ENCODE measurements at regions of chr17 and their contacts with region 1.

Region 1: DNA sequence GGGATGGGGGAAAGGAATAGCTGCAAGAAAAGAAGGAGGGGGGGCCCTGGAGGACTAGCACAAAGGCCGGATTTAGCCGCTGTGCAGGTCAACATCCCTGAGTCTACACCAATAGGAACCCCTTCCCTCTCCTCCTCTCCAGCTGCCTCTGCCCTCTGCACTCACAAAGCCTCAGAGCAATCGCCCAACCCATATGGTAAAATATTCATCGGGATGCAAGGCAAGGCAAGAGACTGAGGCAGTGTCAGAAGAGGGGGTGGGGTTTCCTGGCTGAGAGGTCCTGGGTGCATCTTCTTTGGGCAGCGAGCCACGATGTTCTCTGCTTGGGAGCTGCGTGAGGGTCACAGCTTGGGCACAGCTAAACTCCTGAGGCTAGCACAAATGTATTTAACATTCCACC is 115.5 kb upstream of the NLRP1 start:
- DNase-seq: no peak
- H3K4me3 ChIP-seq: peak overlapping the region in 3 of 4 experiments; percentile 5 to 36 (median 14); a peak in 2 of 8 replicates
- H3K27ac ChIP-seq: peak overlapping the region; percentile 41; the same call in 1 of the 2 replicates
- H3K4me1 ChIP-seq: peaks cover 11 to 25% (median 19%) of the 10 kb centered on the region in 4 experiments; a peak in 5 of 7 replicates
- H3K27me3 ChIP-seq: no peaks in the 10 kb centered on the region
- CTCF ChIP-seq: no peak
- EP300 ChIP-seq: no peak
- POLR2A ChIP-seq: no peak
- RAD21 ChIP-seq: no peak

Region 2: DNA sequence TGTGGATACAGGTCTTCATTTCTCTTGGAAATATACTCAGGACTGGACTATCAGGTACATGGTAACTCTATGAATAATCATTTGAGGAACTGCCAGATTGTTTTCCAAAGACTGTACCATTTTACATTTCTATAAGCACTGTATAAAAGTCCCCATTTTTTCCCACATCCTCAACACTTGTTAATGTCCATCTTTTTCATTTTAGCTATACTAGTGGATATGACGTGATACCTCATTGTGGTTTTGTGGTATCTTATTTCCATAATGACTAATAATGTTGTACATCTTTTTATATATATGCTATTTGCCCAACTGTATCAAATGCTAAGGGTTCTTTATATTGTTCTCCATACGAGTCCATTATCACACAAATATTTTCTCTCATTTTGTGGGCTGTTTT is 303.2 kb before region 1 on chr17:
- CTCF ChIA-PET with region 1: no interaction called
- POLR2A ChIA-PET with region 1: no interaction called
- DNase-seq: no peak
- H3K4me3 ChIP-seq: no peak overlapping the region
- H3K27ac ChIP-seq: no peak overlapping the region
- H3K4me1 ChIP-seq: no peaks in the 10 kb centered on the region
- H3K27me3 ChIP-seq: peaks cover 0 to 2% (median 0%) of the 10 kb centered on the region in 4 experiments; a peak in 1 of 7 replicates
- CTCF ChIP-seq: no peak
- EP300 ChIP-seq: no peak
- POLR2A ChIP-seq: no peak
- RAD21 ChIP-seq: no peak

Region 3: GRCh38 chr17:5563456-5563855 is 136.4 kb before region 1 on chr17:
- CTCF ChIA-PET with region 1: no interaction called
- POLR2A ChIA-PET with region 1: no interaction called
- DNase-seq: no peak
- H3K4me3 ChIP-seq: no peak overlapping the region
- H3K27ac ChIP-seq: no peak overlapping the region
- H3K4me1 ChIP-seq: no peaks in the 10 kb centered on the region
- H3K27me3 ChIP-seq: no peaks in the 10 kb centered on the region; a peak in 1 of 7 replicates
- CTCF ChIP-seq: no peak
- EP300 ChIP-seq: no peak
- POLR2A ChIP-seq: no peak
- RAD21 ChIP-seq: no peak

Region 4: DNA sequence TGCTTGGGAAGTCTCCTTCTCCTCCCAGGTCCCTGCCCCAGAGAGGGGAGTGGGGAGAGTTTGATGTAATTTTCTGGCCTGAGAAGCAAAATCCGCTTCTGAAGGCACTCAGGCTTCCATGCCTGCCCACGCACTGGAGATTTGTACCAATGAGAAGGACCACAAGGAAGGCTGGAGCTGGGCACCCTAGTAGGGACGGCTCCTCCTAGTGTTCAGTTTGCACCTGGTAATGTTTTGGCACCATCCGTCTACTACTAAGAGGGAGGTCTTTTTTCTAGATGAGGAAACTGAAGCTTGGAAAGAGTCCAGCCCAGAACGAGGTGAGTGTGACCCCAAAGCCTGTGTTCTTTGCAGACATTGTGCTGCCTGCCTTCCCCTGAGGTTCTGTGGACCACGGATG is 31.9 kb before region 1 on chr17:
- CTCF ChIA-PET with region 1: interaction called, 26 read pairs
- POLR2A ChIA-PET with region 1: no interaction called
- DNase-seq: peak in 1 of 2 experiments; percentile 47
- H3K4me3 ChIP-seq: no peak overlapping the region
- H3K27ac ChIP-seq: no peak overlapping the region
- H3K4me1 ChIP-seq: 0 out of 7 replicates have a peak, but pooled peaks cover 0 to under 1% (median 0%) of the 10 kb centered on the region in 4 experiments
- H3K27me3 ChIP-seq: no peaks in the 10 kb centered on the region
- CTCF ChIP-seq: peak; percentile 39 to 57 (median 45)
- EP300 ChIP-seq: no peak
- POLR2A ChIP-seq: no peak
- RAD21 ChIP-seq: peak; percentile 16 to 42; a peak in 3 of 4 replicates

Region 5: GRCh38 chr17:5785867-5786509 is 86.2 kb after region 1 on chr17:
- CTCF ChIA-PET with region 1: no interaction called
- POLR2A ChIA-PET with region 1: no interaction called
- DNase-seq: no peak
- H3K4me3 ChIP-seq: no peak overlapping the region
- H3K27ac ChIP-seq: no peak overlapping the region
- H3K4me1 ChIP-seq: peaks cover 0 to 3% (median under 1%) of the 10 kb centered on the region in 4 experiments; a peak in 3 of 7 replicates
- H3K27me3 ChIP-seq: no peaks in the 10 kb centered on the region
- CTCF ChIP-seq: no peak
- EP300 ChIP-seq: no peak
- POLR2A ChIP-seq: no peak
- RAD21 ChIP-seq: no peak

Measured in H1 (cell line).